Left colon (tissue), 2 donors: ENCODE measurements at regions of chr12 and their contacts with region 1.

Region 1: DNA sequence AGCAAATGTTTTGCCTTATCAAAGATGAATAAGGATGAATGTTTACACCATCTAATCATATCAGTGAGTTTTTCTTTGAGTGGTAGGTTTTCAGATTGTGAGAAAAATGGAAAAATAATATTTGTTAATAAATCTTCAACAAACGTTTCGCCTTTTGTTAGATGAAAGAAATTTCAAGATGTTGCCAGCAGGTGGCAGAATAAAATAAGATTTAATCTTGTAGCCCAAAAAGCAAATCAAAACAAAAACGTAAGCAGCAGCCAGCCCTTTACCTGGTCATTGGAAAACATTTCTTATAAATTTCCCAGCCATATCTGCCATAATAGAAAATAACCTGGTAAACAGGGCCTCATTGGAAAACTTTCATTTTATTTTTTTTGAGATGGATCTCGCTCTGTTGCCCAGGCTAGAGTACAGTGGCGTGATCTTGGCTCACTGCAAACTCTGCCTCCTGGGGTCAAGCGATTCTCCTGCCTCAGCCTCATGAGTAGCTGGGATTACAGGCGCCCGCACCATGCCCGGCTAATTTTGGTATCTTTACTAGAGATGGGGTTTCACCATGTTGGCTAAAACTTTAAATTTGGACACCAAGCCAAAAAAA is 15.4 kb upstream of the TMEM120B start:
- DNase-seq: no peak
- ATAC-seq: peak; percentile 33

Region 2: GRCh38 chr12:121748571-121749253 is 51.5 kb after region 1 on chr12:
- intact Hi-C with region 1: no loop called
- DNase-seq: no peak
- ATAC-seq: no peak

Region 3: GRCh38 chr12:121773011-121773777 is 76.0 kb after region 1 on chr12:
- intact Hi-C with region 1: loop called (anchors 5 kb)
- DNase-seq: peak; percentile 66 to 81
- ATAC-seq: peak; percentile 72

Region 4: GRCh38 chr12:121793838-121794533 is 96.8 kb after region 1 on chr12:
- intact Hi-C with region 1: loop called in 1 of 2 experiments (anchors 5 kb)
- DNase-seq: peak; percentile 93 to 95
- ATAC-seq: peak; percentile 50